CD4-positive, alpha-beta memory T cell (primary cell): ENCODE measurements at regions of chr18 and their contacts with region 1.

Region 1: DNA sequence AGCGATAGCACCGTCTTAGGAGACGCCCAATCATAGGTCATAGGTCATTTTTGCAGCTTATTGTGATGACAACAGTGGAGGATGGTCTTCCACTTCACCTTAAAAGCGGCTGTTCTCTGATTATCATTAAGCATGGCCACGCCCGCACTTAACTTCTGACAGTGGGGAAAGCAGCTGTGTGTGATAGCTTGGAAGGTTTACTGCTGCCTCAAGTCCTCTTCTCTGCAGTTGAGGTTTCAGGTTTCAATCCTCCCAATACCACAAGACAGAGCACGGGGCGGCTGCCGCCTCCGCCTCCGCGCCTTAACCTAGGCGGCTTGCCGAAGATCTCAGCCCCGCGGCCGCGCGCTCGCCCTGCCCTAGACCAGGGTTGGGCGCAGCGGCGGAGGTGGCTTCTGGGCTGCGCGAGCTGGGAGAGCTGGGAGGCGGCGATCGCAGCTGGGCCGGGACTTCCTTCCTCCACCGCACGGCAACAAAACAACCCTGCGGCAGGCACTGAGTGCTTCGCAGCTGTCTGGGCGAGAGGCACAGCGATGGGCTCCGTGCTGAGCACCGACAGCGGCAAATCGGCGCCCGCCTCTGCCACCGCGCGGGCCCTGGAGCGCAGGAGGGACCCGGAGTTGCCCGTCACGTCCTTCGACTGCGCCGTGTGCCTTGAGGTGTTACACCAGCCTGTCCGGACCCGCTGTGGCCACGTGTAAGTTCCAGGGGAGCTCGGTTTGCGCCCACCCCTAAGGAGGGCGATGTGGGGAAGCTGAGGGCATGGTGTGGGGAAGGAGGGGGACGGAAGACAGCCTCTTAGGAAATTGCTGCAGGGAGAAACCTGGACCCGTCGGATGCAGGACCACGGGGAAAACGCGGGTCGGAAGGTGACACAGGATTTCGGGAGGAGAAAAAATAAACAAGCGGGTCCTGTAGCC is at the start of gene RNF125:
- DNase-seq: peak; percentile 92 to 97 (median 96)
- H3K4me3 ChIP-seq: peak within 1 kb of the TSS; percentile 86 to 90
- H3K4me3 Mint-ChIP-seq: peak within 1 kb of the TSS; percentile 91 to 98 (median 93)
- H3K27ac ChIP-seq: peak within 1 kb of the TSS; percentile 73
- H3K27ac Mint-ChIP-seq: peak within 1 kb of the TSS; percentile 92 to 99 (median 94)
- H3K4me1 ChIP-seq: peaks cover 61% of the 10 kb centered on the region
- H3K4me1 Mint-ChIP-seq: peaks cover 36 to 84% (median 52%) of the 10 kb centered on the region in 4 donors
- H3K27me3 ChIP-seq: no peaks in the 10 kb centered on the region
- H3K27me3 Mint-ChIP-seq: no peaks in the 10 kb centered on the region
- total RNA-seq, gene RNF125: 38.2 to 40.3 TPM

Region 2: GRCh38 chr18:31942999-31943865 is 75.4 kb before region 1 on chr18 and contains the start of gene TRAPPC8:
- CTCF ChIA-PET with region 1: interaction called, 25 read pairs
- POLR2A ChIA-PET with region 1: interaction called, 134 read pairs
- intact Hi-C with region 1: loop called (anchors 1 kb)
- DNase-seq: peak; percentile 92 to 96 (median 95)
- H3K4me3 ChIP-seq: peak within 1 kb of the TSS; percentile 83 to 99
- H3K4me3 Mint-ChIP-seq: peak within 1 kb of the TSS; percentile 98 to 100 (median 99)
- H3K27ac ChIP-seq: peak within 1 kb of the TSS; percentile 95
- H3K27ac Mint-ChIP-seq: peak within 1 kb of the TSS; percentile 98 to 100 (median 99)
- H3K4me1 ChIP-seq: peaks cover 50% of the 10 kb centered on the region
- H3K4me1 Mint-ChIP-seq: peaks cover 32 to 64% (median 46%) of the 10 kb centered on the region in 4 donors
- H3K27me3 ChIP-seq: no peaks in the 10 kb centered on the region
- H3K27me3 Mint-ChIP-seq: no peaks in the 10 kb centered on the region
- total RNA-seq, gene TRAPPC8: 59.4 to 66.3 TPM

Region 3: GRCh38 chr18:31983020-31983419 is 35.6 kb before region 1 on chr18:
- CTCF ChIA-PET with region 1: interaction called, 19 read pairs
- POLR2A ChIA-PET with region 1: interaction called, 38 read pairs
- intact Hi-C with region 1: loop called (anchors 1 kb)
- DNase-seq: no peak
- H3K4me3 ChIP-seq: no peak overlapping the region
- H3K4me3 Mint-ChIP-seq: peak overlapping the region in 1 of 8 donors; percentile 78
- H3K27ac ChIP-seq: no peak overlapping the region
- H3K27ac Mint-ChIP-seq: peak overlapping the region in 5 of 7 donors; percentile 22 to 90 (median 35)
- H3K4me1 ChIP-seq: peaks cover 29% of the 10 kb centered on the region
- H3K4me1 Mint-ChIP-seq: peaks cover 24 to 36% (median 28%) of the 10 kb centered on the region in 4 donors
- H3K27me3 ChIP-seq: no peaks in the 10 kb centered on the region
- H3K27me3 Mint-ChIP-seq: no peaks in the 10 kb centered on the region

Region 4: GRCh38 chr18:32032609-32033008 is 14.0 kb after region 1 on chr18:
- CTCF ChIA-PET with region 1: interaction called, 36 read pairs
- POLR2A ChIA-PET with region 1: interaction called, 280 read pairs
- intact Hi-C with region 1: no loop called
- DNase-seq: no peak
- H3K4me3 ChIP-seq: no peak overlapping the region
- H3K4me3 Mint-ChIP-seq: peak overlapping the region in 3 of 8 donors; percentile 3 to 56 (median 25)
- H3K27ac ChIP-seq: no peak overlapping the region
- H3K27ac Mint-ChIP-seq: peak overlapping the region in 6 of 7 donors; percentile 47 to 77 (median 68)
- H3K4me1 ChIP-seq: peaks cover 82% of the 10 kb centered on the region
- H3K4me1 Mint-ChIP-seq: peaks cover 60 to 94% (median 77%) of the 10 kb centered on the region in 4 donors
- H3K27me3 ChIP-seq: no peaks in the 10 kb centered on the region
- H3K27me3 Mint-ChIP-seq: no peaks in the 10 kb centered on the region

Region 5: DNA sequence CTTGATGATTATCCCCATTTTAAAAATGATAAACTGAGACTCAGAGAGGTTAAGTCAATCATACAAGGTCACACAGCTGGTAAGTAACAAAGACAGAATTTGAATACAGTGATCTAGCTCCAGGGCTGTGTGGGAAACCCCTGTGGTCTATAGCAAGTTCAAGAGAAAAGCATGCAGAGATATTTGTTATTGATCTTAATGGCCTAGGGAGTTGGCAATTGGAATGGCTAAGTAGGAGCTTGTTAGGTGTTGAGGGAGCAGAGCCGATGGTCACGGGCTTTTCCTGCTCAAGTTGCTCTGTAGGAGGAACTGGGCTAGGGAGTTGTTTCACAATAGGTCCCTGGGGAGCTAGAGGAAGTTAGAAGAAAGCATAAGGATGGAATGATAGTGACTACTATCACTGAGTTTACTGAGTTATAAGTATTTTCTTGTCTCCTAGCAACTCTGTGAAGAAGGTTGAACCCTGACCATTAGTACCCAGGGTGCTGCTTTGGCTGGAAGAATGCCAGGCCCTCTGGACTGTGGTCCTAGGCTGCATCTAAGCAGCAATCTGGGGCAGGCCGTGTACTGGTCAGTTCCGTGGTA is 30.0 kb after region 1 on chr18:
- CTCF ChIA-PET with region 1: interaction called, 14 read pairs
- POLR2A ChIA-PET with region 1: interaction called, 280 read pairs
- intact Hi-C with region 1: loop called (anchors 2 kb)
- DNase-seq: peak in 1 of 5 donors; percentile 19
- H3K4me3 ChIP-seq: no peak overlapping the region
- H3K4me3 Mint-ChIP-seq: peak overlapping the region in 7 of 8 donors; percentile 4 to 73 (median 44)
- H3K27ac ChIP-seq: peak overlapping the region; percentile 52
- H3K27ac Mint-ChIP-seq: peak overlapping the region in 6 of 7 donors; percentile 14 to 93 (median 90)
- H3K4me1 ChIP-seq: peaks cover 42% of the 10 kb centered on the region
- H3K4me1 Mint-ChIP-seq: peaks cover 30 to 54% (median 42%) of the 10 kb centered on the region in 4 donors
- H3K27me3 ChIP-seq: no peaks in the 10 kb centered on the region
- H3K27me3 Mint-ChIP-seq: no peaks in the 10 kb centered on the region

Region 6: GRCh38 chr18:32072321-32072720 is 53.7 kb after region 1 on chr18:
- CTCF ChIA-PET with region 1: interaction called, 42 read pairs
- POLR2A ChIA-PET with region 1: interaction called, 62 read pairs
- intact Hi-C with region 1: loop called (anchors 1 kb)
- DNase-seq: peak in 4 of 5 donors; percentile 43 to 49 (median 48)
- H3K4me3 ChIP-seq: no peak overlapping the region
- H3K4me3 Mint-ChIP-seq: no peak overlapping the region
- H3K27ac ChIP-seq: no peak overlapping the region
- H3K27ac Mint-ChIP-seq: peak overlapping the region in 4 of 7 donors; percentile 13 to 64 (median 58)
- H3K4me1 ChIP-seq: peaks cover 9% of the 10 kb centered on the region
- H3K4me1 Mint-ChIP-seq: peaks cover 5 to 11% (median 8%) of the 10 kb centered on the region in 4 donors
- H3K27me3 ChIP-seq: no peaks in the 10 kb centered on the region
- H3K27me3 Mint-ChIP-seq: no peaks in the 10 kb centered on the region

Region 7: GRCh38 chr18:32092422-32093101 is 74.0 kb after region 1 on chr18:
- CTCF ChIA-PET with region 1: interaction called, 31 read pairs
- POLR2A ChIA-PET with region 1: interaction called, 147 read pairs
- intact Hi-C with region 1: loop called (anchors 1 kb)
- DNase-seq: peak; percentile 98 to 99 (median 99)
- H3K4me3 ChIP-seq: peak overlapping the region; percentile 91 to 96
- H3K4me3 Mint-ChIP-seq: peak overlapping the region; percentile 95 to 99 (median 98)
- H3K27ac ChIP-seq: peak overlapping the region; percentile 98
- H3K27ac Mint-ChIP-seq: peak overlapping the region; percentile 98 to 99 (median 98)
- H3K4me1 ChIP-seq: peaks cover 40% of the 10 kb centered on the region
- H3K4me1 Mint-ChIP-seq: peaks cover 28 to 55% (median 41%) of the 10 kb centered on the region in 4 donors
- H3K27me3 ChIP-seq: no peaks in the 10 kb centered on the region
- H3K27me3 Mint-ChIP-seq: no peaks in the 10 kb centered on the region